Activated CD4-positive, alpha-beta T cell treated with anti-CD3 and anti-CD28 coated beads for 36 hours (primary cell): ENCODE measurements at regions of chr1 and their contacts with region 1.

Region 1: DNA sequence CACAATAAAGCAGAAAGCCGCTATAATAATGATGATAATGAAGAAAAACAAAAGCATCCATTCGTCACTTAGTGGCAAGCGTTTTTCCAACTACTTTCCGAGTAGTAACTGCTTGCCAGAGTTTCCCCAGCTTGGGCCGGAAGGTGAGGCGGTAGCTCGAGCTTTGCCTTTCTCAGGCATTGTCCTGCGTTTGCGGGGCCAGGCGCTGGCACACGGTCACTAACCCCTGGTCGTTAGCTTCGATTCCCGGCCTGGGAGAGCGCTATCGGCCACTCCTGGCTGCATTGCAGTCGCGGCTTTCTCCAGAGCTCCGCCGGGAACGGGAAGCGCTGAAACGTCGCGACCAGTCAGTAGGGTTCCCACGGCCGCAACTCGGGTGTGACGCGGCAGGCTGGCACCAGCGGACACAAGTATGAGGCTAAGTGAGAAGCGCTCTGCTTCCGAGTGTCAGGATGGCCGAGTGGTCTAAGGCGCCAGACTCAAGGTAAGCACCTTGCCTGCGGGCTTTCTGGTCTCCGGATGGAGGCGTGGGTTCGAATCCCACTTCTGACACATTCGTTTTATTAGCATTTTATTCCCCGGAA is 14.6 kb upstream of the ZNF692 start:
- DNase-seq: peak; percentile 95
- ATAC-seq: peak; percentile 83
- H3K4me3 Mint-ChIP-seq: peak overlapping the region; percentile 87
- H3K27ac Mint-ChIP-seq: peak overlapping the region; percentile 94
- H3K4me1 Mint-ChIP-seq: peaks cover 25% of the 10 kb centered on the region
- H3K27me3 Mint-ChIP-seq: no peaks in the 10 kb centered on the region

Region 2: GRCh38 chr1:248421384-248421783 is 452.1 kb before region 1 on chr1:
- CTCF ChIA-PET with region 1: no interaction called
- POLR2A ChIA-PET with region 1: no interaction called
- intact Hi-C with region 1: no loop called
- DNase-seq: no peak
- ATAC-seq: no peak
- H3K4me3 Mint-ChIP-seq: no peak overlapping the region
- H3K27ac Mint-ChIP-seq: no peak overlapping the region
- H3K4me1 Mint-ChIP-seq: peaks cover 18% of the 10 kb centered on the region
- H3K27me3 Mint-ChIP-seq: no peaks in the 10 kb centered on the region

Region 3: GRCh38 chr1:248521859-248522258 is 351.6 kb before region 1 on chr1:
- CTCF ChIA-PET with region 1: no interaction called
- POLR2A ChIA-PET with region 1: no interaction called
- intact Hi-C with region 1: no loop called
- DNase-seq: no peak
- ATAC-seq: no peak
- H3K4me3 Mint-ChIP-seq: no peak overlapping the region
- H3K27ac Mint-ChIP-seq: no peak overlapping the region
- H3K4me1 Mint-ChIP-seq: no peaks in the 10 kb centered on the region
- H3K27me3 Mint-ChIP-seq: no peaks in the 10 kb centered on the region

Region 4: GRCh38 chr1:248793592-248793991 is 79.9 kb before region 1 on chr1:
- CTCF ChIA-PET with region 1: no interaction called
- POLR2A ChIA-PET with region 1: no interaction called
- intact Hi-C with region 1: no loop called
- DNase-seq: no peak
- ATAC-seq: peak; percentile 75
- H3K4me3 Mint-ChIP-seq: no peak overlapping the region
- H3K27ac Mint-ChIP-seq: no peak overlapping the region
- H3K4me1 Mint-ChIP-seq: peaks cover 3% of the 10 kb centered on the region
- H3K27me3 Mint-ChIP-seq: peaks cover 12% of the 10 kb centered on the region

Region 5: DNA sequence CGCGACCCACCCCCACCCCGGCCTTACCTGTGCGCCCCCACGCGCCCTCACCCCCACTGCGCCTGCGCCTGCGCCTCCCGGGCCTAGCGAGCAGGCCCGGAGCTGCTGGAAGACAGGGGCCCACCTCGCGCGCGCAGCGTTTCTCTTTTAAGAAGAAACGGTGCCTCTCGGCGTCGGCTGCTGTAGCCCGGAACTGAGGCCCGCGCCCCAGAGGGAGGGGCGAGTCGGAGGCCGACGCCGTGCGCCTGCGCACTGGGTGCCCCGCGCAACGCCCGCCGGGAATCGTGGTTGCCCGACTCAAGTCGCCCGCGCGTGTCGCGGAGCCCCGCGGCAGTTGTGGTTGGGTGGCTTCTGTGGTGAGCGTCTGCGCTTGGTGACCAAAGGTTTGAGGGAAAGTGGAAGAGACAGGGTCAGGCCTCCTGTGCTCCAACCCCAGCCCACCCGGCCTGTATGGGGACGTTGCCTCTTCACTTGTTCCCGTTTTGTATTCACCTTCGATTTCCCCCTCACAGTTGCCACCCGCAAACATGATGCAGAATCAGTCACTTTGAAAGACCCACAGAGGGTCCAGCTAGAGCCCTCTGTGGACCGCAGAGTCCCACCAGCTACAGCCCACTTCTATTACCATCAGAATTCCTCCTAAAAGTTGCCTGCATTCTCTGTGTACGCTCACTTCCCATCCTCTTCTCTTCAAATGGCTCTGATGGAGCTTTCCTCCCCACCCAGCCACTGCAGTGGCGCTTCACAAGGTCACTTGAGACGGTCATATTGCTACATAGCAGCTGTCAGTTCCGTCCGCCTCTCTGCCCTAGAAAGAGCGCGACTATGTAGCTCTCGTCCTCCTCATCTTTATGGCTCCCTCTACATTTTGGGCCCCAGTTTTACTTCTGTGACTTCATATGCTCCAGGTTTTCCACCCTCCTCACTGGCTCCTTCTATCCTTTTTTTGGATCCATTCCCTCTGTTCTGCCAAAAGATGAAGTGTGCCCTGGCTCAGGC is 14.3 kb before region 1 on chr1 and contains the start of gene ZNF692:
- CTCF ChIA-PET with region 1: interaction called, 20 read pairs
- POLR2A ChIA-PET with region 1: interaction called, 5 read pairs
- intact Hi-C with region 1: loop called (anchors 1 kb)
- DNase-seq: peak; percentile 99
- ATAC-seq: peak; percentile 86
- H3K4me3 Mint-ChIP-seq: peak within 1 kb of the TSS; percentile 89
- H3K27ac Mint-ChIP-seq: peak within 1 kb of the TSS; percentile 99
- H3K4me1 Mint-ChIP-seq: peaks cover 55% of the 10 kb centered on the region
- H3K27me3 Mint-ChIP-seq: no peaks in the 10 kb centered on the region
- total RNA-seq, gene ZNF692: 75.9 to 92.3 TPM